A673 (cell line): ENCODE measurements at regions of chr2 and their contacts with region 1.

Region 1: GRCh38 chr2:179440642-179441251 is 176.1 kb upstream of the SESTD1 start:
- DNase-seq: peak; percentile 59
- H3K4me3 ChIP-seq: no peak overlapping the region
- H3K27ac ChIP-seq: no peak overlapping the region
- H3K4me1 ChIP-seq: no peaks in the 10 kb centered on the region
- H3K27me3 ChIP-seq: no peaks in the 10 kb centered on the region
- CTCF ChIP-seq: peak; percentile 77

Region 2: GRCh38 chr2:179218848-179219594 is 221.7 kb before region 1 on chr2:
- CTCF ChIA-PET with region 1: interaction called, 4 read pairs
- POLR2A ChIA-PET with region 1: no interaction called
- intact Hi-C with region 1: loop called (anchors 2 kb)
- DNase-seq: peak; percentile 80
- H3K4me3 ChIP-seq: no peak overlapping the region
- H3K27ac ChIP-seq: no peak overlapping the region
- H3K4me1 ChIP-seq: no peaks in the 10 kb centered on the region
- H3K27me3 ChIP-seq: no peaks in the 10 kb centered on the region
- CTCF ChIP-seq: peak; percentile 90